Activated T-helper 1 cell treated with anti-CD3 and anti-CD28 coated beads, Interleukin-12 subunit alpha, Interleukin-12 subunit beta, Interleukin-2, Interleukin-4 antibody, amounts not matched to agents 30 ng/mL and 10 ng/mL and 1 ng/mL, durations not matched to agents 14 hours and 24 hours and 36 hours (primary cell): ENCODE measurements at regions of chr5 and their contacts with region 1.

Region 1: GRCh38 chr5:151447174-151448037 is at the start of gene SLC36A1:
- DNase-seq: peak; percentile 88
- H3K4me3 Mint-ChIP-seq: peak within 1 kb of the TSS; percentile 98
- H3K27ac Mint-ChIP-seq: peak within 1 kb of the TSS; percentile 96
- H3K4me1 Mint-ChIP-seq: peaks cover 31% of the 10 kb centered on the region
- H3K27me3 Mint-ChIP-seq: peaks cover 25% of the 10 kb centered on the region
- total RNA-seq, gene SLC36A1: 5.8 and 7.9 TPM in 2 replicates

Region 2: GRCh38 chr5:151270599-151270998 is 176.8 kb before region 1 on chr5:
- intact Hi-C with region 1: loop called (anchors 5 kb)
- DNase-seq: peak; percentile 12
- H3K4me3 Mint-ChIP-seq: no peak overlapping the region
- H3K27ac Mint-ChIP-seq: no peak overlapping the region
- H3K4me1 Mint-ChIP-seq: no peaks in the 10 kb centered on the region
- H3K27me3 Mint-ChIP-seq: peaks cover 2% of the 10 kb centered on the region

Region 3: DNA sequence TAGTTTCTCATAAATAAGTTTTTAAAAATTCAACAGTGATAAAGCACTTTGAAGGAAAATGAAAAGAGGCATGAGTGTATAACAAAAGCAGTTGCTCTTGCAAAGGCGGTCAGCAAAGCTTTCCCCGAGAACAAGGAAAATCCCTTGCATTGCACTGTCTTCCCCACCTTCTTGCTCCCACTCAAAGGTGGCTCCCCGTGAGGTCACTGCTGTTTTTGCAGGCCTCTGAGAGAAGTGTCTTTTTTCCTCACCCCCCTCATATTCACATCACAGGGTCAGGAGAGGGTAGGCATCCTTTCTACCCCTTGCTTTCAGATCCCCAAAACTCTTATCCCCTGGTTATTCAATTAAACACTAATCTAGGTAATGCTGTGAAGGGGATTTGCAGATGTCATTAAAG is 15.2 kb before region 1 on chr5:
- intact Hi-C with region 1: no loop called
- DNase-seq: no peak
- H3K4me3 Mint-ChIP-seq: no peak overlapping the region
- H3K27ac Mint-ChIP-seq: no peak overlapping the region
- H3K4me1 Mint-ChIP-seq: no peaks in the 10 kb centered on the region
- H3K27me3 Mint-ChIP-seq: peaks cover 7% of the 10 kb centered on the region

Region 4: DNA sequence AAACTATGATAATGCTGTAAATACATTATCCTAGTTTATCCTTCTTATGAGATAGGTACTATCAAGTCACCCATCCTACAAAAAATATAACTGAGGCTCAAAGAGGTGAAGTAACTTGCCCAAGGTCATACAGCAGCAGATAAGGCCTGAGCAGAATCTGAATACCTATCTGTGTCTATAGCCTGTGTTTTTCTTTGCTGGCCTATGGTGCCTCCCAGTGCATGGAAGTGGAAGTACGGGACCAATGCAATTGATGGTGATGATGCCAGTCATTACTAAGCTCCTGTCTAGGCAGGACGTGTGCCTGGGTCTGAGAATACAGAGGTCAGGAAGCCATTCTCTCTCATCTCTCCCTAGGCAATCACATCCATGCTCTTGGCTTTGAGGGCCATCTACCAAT is 75.9 kb after region 1 on chr5:
- intact Hi-C with region 1: loop called (anchors 1 kb)
- DNase-seq: peak; percentile 15
- H3K4me3 Mint-ChIP-seq: no peak overlapping the region
- H3K27ac Mint-ChIP-seq: no peak overlapping the region
- H3K4me1 Mint-ChIP-seq: no peaks in the 10 kb centered on the region
- H3K27me3 Mint-ChIP-seq: peaks cover 2% of the 10 kb centered on the region

Region 5: DNA sequence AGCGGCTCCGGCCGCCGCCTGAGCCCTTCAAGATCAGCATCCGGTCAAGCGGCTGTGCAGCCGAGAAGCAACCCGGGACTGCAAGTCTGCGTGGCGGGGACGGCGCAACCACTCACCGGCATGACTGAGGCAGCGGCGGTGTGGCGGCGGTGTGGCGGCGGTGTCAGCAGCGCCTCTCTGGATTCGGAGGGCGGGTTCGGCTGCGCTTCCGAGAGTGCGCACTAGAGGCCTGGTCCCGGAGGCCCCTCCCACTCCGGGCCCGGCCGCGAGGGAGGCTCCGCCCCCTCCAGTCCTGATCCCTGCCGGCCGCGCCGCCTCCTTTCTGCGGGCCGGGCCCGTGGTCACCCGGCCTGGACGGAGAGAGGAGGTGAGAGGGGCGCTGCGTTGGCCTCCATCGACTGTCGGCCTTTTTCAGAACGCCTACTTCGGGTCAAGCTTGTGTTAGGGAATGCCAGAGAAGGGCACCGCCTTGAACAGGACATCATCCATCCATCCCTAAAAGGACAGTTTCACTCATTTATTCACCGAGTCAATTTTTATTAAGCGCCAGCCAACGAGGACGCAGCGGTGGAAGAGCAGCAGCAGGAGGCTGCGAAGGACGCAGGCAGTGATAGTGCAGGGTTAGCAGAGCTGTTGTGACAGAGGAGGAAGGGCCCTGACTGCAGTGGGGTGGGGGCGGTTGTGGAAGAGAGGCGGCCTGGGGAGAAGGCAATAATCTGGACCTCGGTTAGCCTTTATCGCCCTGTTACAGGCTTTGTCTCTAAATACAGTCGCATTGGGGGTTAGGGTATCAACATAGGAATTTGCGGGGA is 311.2 kb after region 1 on chr5 and contains the start of gene ATOX1:
- intact Hi-C with region 1: loop called (anchors 5 kb)
- DNase-seq: peak; percentile 90
- H3K4me3 Mint-ChIP-seq: peak within 1 kb of the TSS; percentile 87
- H3K27ac Mint-ChIP-seq: peak within 1 kb of the TSS; percentile 92
- H3K4me1 Mint-ChIP-seq: peaks cover 43% of the 10 kb centered on the region
- H3K27me3 Mint-ChIP-seq: no peaks in the 10 kb centered on the region
- total RNA-seq, gene ATOX1: 72.5 and 83.7 TPM in 2 replicates